Sigmoid colon (tissue), 7 donors: ENCODE measurements at regions of chr21 and their contacts with region 1.

Region 1: GRCh38 chr21:33266050-33266788 is at the start of gene IL10RB:
- DNase-seq: peak; percentile 80
- H3K4me3 ChIP-seq: peak within 1 kb of the TSS; percentile 76 to 90 (median 78)
- H3K27ac ChIP-seq: peak within 1 kb of the TSS; percentile 80 to 88 (median 86)
- H3K4me1 ChIP-seq: peaks cover 0 to 18% (median 14%) of the 10 kb centered on the region in 4 donors
- H3K27me3 ChIP-seq: no peaks in the 10 kb centered on the region
- CTCF ChIP-seq: no peak
- EP300 ChIP-seq: no peak
- POLR2A ChIP-seq: no peak
- total RNA-seq, gene IL10RB: 15.0 to 26.2 (median 23.6) TPM

Region 2: DNA sequence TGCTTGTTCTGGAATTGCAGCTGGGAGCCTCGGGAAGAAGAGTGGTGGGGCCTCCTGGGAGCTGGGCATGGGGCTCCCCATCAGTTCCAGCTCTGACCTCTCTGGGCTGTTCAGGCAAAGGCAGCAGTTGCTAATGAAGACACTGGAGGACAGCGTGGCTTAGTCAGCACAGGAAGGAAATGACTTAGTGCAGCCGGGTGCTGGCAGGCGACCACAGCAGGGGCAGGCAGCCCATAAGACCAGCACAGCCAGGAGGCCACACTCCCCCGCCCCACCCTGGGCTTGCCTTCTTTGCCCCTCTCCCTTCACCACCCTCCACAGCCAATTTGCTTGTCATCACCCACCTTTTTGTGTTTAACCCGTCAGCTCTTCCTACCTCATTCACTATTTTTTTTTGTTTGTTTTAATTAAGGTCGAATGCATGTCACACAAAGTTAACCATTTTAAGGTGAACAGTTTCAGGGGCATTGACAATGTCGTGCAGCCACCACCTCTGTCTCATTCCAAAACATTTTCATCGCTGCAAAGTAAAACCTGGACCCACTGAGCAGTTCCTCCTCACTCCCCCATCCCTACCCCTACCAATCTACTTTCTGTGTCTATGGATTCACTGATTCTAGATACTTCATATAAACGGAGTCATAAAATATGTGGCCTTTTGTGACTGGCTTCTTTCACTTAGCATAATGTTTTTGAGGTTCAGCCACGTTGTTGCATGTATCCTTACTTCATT is 229.6 kb before region 1 on chr21:
- intact Hi-C with region 1: no loop called
- DNase-seq: peak; percentile 68
- H3K4me3 ChIP-seq: no peak overlapping the region
- H3K27ac ChIP-seq: no peak overlapping the region
- H3K4me1 ChIP-seq: no peaks in the 10 kb centered on the region
- H3K27me3 ChIP-seq: peaks cover 0 to 71% (median 47%) of the 10 kb centered on the region in 3 donors
- CTCF ChIP-seq: no peak
- EP300 ChIP-seq: no peak
- POLR2A ChIP-seq: no peak

Region 3: DNA sequence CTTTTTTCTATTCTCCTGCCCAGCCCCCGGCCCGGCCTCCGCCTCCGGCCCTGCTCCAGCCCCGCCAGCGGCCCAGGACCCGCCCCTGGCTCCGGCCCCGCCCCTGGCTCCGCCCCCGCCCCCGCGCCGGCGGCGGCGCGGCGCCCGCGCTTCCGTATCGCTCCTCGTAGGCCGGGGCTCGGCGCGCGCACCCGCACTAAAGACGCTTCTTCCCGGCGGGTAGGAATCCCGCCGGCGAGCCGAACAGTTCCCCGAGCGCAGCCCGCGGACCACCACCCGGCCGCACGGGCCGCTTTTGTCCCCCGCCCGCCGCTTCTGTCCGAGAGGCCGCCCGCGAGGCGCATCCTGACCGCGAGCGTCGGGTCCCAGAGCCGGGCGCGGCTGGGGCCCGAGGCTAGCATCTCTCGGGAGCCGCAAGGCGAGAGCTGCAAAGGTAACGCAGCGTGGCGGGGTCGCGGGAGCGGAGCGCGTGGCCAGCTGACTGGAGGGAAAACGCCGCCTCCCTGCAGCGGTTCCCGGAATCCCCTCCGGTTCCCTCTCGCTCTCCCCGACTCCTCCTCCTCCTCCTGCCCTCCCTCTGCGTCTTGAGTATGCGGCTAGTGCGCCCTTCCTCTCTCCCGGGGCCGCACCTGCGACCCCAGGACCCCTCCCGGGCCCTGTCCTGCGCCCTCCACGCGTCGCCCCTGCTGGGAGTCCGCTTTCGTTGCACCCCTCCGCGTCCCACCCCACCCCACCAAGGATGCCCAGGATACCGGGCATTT is 36.3 kb before region 1 on chr21 and contains the start of gene IFNAR2:
- intact Hi-C with region 1: loop called (anchors 1 kb)
- DNase-seq: peak; percentile 78
- H3K4me3 ChIP-seq: peak within 1 kb of the TSS; percentile 86 to 100 (median 96)
- H3K27ac ChIP-seq: peak within 1 kb of the TSS; percentile 96 to 98 (median 98)
- H3K4me1 ChIP-seq: peaks cover 0 to 22% (median 14%) of the 10 kb centered on the region in 4 donors
- H3K27me3 ChIP-seq: no peaks in the 10 kb centered on the region
- CTCF ChIP-seq: no peak
- EP300 ChIP-seq: no peak
- POLR2A ChIP-seq: peak in 1 of 2 donors; percentile 48
- total RNA-seq, gene IFNAR2: 7.6 to 19.0 (median 12.2) TPM